Activated CD4-positive, alpha-beta T cell treated with anti-CD3 and anti-CD28 coated beads for 36 hours (primary cell): ENCODE measurements at regions of chr11 and their contacts with region 1.

Region 1: GRCh38 chr11:103055221-103055890 is 36.6 kb downstream of the DCUN1D5 start:
- DNase-seq: no peak
- ATAC-seq: peak; percentile 61
- H3K4me3 Mint-ChIP-seq: no peak overlapping the region
- H3K27ac Mint-ChIP-seq: no peak overlapping the region
- H3K4me1 Mint-ChIP-seq: peaks cover 5% of the 10 kb centered on the region
- H3K27me3 Mint-ChIP-seq: no peaks in the 10 kb centered on the region

Region 2: DNA sequence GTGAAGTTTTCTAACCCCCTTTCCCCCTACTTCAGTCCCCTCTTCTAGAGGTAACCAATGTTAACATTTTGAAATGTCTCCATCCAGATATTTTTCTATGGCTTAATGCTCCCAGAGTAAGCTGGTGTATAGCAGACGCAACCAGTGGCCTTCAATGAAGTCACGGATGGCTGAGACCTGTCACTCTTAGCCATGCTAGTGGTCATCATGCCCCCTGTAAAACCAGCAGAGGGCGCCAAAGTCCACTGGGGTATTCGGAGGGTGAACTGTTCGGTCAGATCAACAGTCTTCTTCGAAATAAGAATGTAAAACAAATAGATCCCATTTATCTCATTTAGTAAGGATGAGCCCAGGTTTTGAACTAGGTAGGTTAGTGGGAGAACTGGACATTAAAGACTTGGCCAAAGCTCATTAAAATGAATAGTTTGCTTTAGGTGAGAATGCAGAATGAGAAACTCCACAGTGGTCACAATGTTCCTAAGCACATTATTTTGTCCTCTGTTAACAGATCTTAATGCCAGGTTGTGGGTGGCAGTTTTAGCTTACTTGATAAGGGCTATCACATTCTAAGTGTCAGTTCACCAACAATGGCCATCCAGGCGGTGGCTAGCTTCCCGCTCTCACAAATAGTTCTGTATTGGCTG is 322.0 kb before region 1 on chr11:
- CTCF ChIA-PET with region 1: no interaction called
- POLR2A ChIA-PET with region 1: no interaction called
- intact Hi-C with region 1: loop called in 1 of 2 experiments (anchors 1 kb)
- DNase-seq: peak; percentile 79
- ATAC-seq: peak; percentile 65
- H3K4me3 Mint-ChIP-seq: no peak overlapping the region
- H3K27ac Mint-ChIP-seq: no peak overlapping the region
- H3K4me1 Mint-ChIP-seq: no peaks in the 10 kb centered on the region
- H3K27me3 Mint-ChIP-seq: peaks cover 14% of the 10 kb centered on the region

Region 3: DNA sequence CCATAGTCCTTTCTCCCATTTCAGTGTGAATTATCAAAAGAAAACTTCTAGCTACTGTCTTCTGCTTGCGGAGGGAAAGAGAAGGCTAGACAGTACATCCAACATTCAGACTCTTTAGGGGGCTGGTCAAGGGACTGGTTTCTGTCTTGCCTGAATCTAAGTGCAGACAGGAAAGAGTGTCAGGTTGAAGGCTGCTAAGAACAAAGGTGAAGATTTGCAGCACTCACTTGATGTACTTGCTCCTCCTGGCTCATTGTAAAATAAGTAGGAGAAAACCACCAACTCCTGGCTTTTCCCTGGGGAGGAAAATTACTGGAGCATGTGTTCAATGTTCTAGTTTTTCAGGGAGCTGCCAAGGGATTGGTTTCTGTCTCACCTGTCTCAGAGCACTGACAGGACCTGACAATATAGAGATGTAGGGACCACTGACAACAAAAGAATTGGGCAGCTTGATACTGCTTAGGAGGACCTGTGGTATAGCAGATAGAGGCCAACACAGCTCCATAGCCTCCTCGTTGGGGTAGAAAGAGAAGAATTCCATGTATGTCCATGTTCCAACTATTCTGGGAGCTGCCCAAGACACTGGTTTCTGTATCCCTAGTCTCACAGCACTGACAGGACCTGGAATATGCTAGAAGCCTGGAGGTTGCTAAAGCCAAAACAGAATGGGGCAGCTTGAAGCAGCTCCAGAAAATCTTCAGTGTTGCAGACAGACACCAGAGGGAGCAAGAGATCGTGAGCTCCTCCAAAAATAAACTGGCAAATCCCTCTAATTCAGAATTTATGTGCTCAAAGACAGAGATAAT is 140.9 kb before region 1 on chr11:
- CTCF ChIA-PET with region 1: interaction called, 3 read pairs
- POLR2A ChIA-PET with region 1: no interaction called
- intact Hi-C with region 1: loop called in 1 of 2 experiments (anchors 1 kb)
- DNase-seq: peak; percentile 14
- ATAC-seq: no peak
- H3K4me3 Mint-ChIP-seq: no peak overlapping the region
- H3K27ac Mint-ChIP-seq: no peak overlapping the region
- H3K4me1 Mint-ChIP-seq: no peaks in the 10 kb centered on the region
- H3K27me3 Mint-ChIP-seq: peaks cover 9% of the 10 kb centered on the region

Region 4: DNA sequence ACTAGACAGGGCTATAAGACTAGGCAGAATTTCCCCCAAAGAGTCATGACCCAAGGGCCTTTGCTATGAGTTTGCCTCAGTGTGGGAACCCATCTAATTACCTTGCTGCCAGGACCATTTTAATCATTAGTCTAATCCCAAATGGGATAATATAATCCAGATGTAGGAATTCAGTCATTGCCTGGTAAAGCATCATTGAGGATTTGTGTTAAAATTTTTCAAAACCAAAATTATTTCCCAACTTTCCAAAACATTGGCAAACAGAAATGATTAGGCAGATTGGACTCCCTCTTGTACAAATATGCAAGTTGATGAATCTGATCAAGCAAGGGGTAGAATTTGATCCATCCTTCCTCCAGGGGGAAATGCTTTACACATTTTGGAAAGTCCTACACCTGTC is 83.6 kb before region 1 on chr11:
- CTCF ChIA-PET with region 1: no interaction called
- POLR2A ChIA-PET with region 1: no interaction called
- intact Hi-C with region 1: no loop called
- DNase-seq: no peak
- ATAC-seq: no peak
- H3K4me3 Mint-ChIP-seq: no peak overlapping the region
- H3K27ac Mint-ChIP-seq: no peak overlapping the region
- H3K4me1 Mint-ChIP-seq: no peaks in the 10 kb centered on the region
- H3K27me3 Mint-ChIP-seq: peaks cover 20% of the 10 kb centered on the region